GM10248 (cell line): ENCODE measurements at regions of chr19 and their contacts with region 1.

Region 1: DNA sequence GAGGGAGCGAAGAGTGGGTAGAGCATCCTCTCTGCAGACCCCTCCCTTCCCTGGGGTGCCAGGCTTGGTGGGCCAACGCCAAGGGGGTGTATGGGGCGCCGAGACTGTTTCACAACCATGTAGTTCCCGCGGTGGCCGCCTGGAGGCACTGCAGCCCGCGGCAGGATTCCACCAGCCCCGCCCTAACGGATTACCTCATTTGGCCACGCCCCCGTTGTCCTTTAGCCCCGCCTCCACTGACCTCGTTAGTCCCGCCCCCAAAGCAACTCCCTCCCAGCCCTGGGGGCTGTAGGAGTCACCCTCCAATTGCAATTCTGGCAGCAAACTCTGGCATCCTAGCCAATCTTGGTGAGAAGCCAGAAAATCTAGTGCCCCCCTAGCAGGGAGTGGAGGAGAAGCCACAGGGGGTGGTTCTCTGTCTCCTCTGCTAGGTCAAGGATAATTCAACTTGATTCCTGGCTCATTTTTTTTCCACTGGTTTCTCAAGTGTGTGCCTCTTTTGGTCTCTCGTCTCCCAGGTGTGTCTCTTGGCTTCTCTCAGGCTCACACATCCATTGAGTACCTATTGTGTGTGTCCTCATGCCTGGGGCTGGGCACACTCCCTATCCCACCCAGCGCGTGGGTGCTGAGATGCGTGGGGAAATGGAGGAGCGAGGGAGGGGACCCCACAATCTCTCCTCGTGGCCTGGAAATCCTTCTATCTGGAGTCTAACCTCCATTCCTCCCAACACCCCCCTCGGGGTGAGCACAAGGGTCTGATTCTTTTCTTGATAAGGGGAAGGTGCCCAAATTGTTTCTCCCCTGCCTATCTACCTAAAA is 2.0 kb downstream of the OLFM2 start:
- DNase-seq: peak; percentile 87
- CTCF ChIP-seq: peak; percentile 90

Region 2: DNA sequence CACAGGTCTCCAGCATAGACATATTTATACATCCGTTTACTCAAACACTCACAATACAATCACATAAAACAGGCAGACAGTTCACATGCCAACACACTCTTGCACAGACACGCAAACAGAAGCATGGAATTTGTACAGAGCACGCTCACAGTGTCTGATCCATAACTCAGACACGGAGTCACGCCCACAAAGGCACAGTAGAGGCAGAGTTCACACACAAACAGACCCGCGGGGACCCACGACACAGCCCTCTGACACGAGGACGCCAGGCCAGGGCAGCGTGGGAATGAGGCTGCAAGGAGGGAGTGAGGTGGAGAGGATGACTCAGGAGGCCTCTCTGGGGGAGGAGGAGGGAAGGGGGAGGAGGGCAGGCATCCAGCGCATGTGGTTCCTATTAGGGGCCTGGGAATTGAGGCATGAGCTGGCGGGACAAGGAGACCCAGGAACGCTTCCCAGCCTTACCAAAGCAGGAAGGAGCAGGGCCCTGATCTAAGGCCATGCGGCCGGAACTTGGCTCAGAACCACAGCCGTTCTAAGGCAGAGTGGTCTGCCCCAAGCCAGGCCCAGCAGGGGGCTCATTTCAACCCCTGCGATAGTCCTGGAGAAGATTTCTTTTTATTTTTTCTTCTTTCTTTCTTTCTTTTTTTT is 11.1 kb after region 1 on chr19:
- CTCF ChIA-PET with region 1: interaction called, 18 read pairs
- POLR2A ChIA-PET with region 1: no interaction called
- DNase-seq: no peak
- CTCF ChIP-seq: no peak

Region 3: GRCh38 chr19:10027158-10027693 is 92.9 kb after region 1 on chr19:
- CTCF ChIA-PET with region 1: interaction called, 88 read pairs
- POLR2A ChIA-PET with region 1: no interaction called
- DNase-seq: no peak
- CTCF ChIP-seq: no peak

Region 4: DNA sequence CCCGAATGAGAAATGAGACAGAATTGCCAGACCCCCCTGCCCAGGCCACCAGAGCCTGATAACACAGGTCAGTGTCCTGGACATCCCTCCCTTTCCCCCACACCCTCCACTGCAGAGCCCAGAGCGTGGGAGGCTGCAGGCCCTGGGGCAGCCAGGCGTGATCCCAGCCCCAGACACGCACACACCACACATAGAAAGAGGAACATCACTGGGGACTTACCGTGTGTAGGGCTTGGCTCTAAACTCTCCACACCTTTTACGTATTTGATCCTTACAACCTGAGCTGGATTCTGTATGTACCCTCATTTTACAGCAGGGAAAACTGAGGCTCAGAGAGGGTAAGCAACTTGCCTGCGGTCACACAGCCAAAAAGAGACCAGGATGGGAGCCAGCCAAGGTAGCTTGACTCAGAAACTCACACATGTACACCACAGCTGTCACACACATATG is 168.5 kb after region 1 on chr19:
- CTCF ChIA-PET with region 1: no interaction called
- POLR2A ChIA-PET with region 1: no interaction called
- DNase-seq: peak; percentile 75
- CTCF ChIP-seq: no peak

Region 5: GRCh38 chr19:10251792-10252694 is 317.7 kb after region 1 on chr19 and contains the start of gene MRPL4:
- CTCF ChIA-PET with region 1: interaction called, 17 read pairs
- POLR2A ChIA-PET with region 1: interaction called, 5 read pairs
- DNase-seq: peak; percentile 94
- CTCF ChIP-seq: no peak